Naive thymus-derived CD4-positive, alpha-beta T cell (primary cell): ENCODE measurements at regions of chr1 and their contacts with region 1.

Region 1: GRCh38 chr1:168535536-168535935 is 8.3 kb downstream of the XCL2 start:
- DNase-seq: peak in 7 of 9 donors; percentile 40 to 66 (median 56)
- ATAC-seq: peak; percentile 89
- H3K4me3 ChIP-seq: peak overlapping the region; percentile 5
- H3K4me3 Mint-ChIP-seq: peak overlapping the region; percentile 60 to 86 (median 76)
- H3K27ac ChIP-seq: peak overlapping the region; percentile 43
- H3K27ac Mint-ChIP-seq: peak overlapping the region; percentile 83 to 96 (median 89)
- H3K4me1 ChIP-seq: peaks cover 55 to 59% of the 10 kb centered on the region in 2 donors
- H3K4me1 Mint-ChIP-seq: peaks cover 59 to 93% (median 86%) of the 10 kb centered on the region in 7 donors
- H3K27me3 ChIP-seq: no peaks in the 10 kb centered on the region
- H3K27me3 Mint-ChIP-seq: no peaks in the 10 kb centered on the region

Region 2: DNA sequence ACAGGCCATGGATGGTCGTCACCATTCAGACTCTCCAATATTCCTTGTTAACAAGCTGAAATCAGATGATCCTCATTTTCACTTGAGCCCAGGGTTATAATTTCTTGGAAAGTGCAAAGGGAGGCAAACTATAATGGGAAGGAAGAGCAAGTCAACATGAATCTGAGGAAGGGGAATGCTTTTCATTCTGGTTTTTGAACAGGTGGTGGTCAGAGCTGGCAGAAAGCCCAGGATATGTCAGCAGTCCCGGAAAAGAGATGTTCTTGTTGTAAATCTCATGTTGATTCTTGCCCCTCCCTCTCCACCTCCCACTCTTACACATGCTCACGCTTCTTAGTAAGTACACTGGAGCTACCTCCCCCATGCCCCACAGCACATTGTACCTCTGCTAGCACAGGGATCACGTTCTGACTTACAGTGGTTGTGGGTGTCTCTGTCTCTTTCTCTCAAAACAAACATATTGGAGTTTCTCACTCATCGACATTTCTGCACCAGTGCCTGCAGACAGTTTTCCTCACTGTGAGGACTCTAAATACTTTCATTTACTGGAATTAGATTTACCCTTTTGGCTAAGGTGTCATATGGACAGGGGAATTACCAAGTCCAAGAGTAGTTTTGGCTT is 69.3 kb before region 1 on chr1:
- CTCF ChIA-PET with region 1: no interaction called
- POLR2A ChIA-PET with region 1: interaction called, 6 read pairs
- intact Hi-C with region 1: loop called in 1 of 2 experiments (anchors 5 kb)
- DNase-seq: peak in 4 of 9 donors; percentile 29 to 39 (median 32)
- ATAC-seq: peak; percentile 54
- H3K4me3 ChIP-seq: no peak overlapping the region
- H3K4me3 Mint-ChIP-seq: peak overlapping the region; percentile 44 to 72 (median 56)
- H3K27ac ChIP-seq: no peak overlapping the region
- H3K27ac Mint-ChIP-seq: peak overlapping the region; percentile 66 to 89 (median 80)
- H3K4me1 ChIP-seq: peaks cover 40 to 51% of the 10 kb centered on the region in 2 donors
- H3K4me1 Mint-ChIP-seq: peaks cover 47 to 66% (median 60%) of the 10 kb centered on the region in 7 donors
- H3K27me3 ChIP-seq: no peaks in the 10 kb centered on the region
- H3K27me3 Mint-ChIP-seq: no peaks in the 10 kb centered on the region

Region 3: GRCh38 chr1:168504064-168504837 is 31.3 kb before region 1 on chr1:
- CTCF ChIA-PET with region 1: no interaction called
- POLR2A ChIA-PET with region 1: interaction called, 3 read pairs
- intact Hi-C with region 1: loop called (anchors 5 kb)
- DNase-seq: no peak
- ATAC-seq: peak; percentile 94
- H3K4me3 ChIP-seq: no peak overlapping the region
- H3K4me3 Mint-ChIP-seq: peak overlapping the region in 1 of 10 donors; percentile 33
- H3K27ac ChIP-seq: no peak overlapping the region
- H3K27ac Mint-ChIP-seq: peak overlapping the region in 5 of 9 donors; percentile 0 to 70 (median 5)
- H3K4me1 ChIP-seq: peaks cover 6 to 9% of the 10 kb centered on the region in 2 donors
- H3K4me1 Mint-ChIP-seq: peaks cover 30 to 71% (median 40%) of the 10 kb centered on the region in 7 donors
- H3K27me3 ChIP-seq: no peaks in the 10 kb centered on the region
- H3K27me3 Mint-ChIP-seq: no peaks in the 10 kb centered on the region

Region 4: DNA sequence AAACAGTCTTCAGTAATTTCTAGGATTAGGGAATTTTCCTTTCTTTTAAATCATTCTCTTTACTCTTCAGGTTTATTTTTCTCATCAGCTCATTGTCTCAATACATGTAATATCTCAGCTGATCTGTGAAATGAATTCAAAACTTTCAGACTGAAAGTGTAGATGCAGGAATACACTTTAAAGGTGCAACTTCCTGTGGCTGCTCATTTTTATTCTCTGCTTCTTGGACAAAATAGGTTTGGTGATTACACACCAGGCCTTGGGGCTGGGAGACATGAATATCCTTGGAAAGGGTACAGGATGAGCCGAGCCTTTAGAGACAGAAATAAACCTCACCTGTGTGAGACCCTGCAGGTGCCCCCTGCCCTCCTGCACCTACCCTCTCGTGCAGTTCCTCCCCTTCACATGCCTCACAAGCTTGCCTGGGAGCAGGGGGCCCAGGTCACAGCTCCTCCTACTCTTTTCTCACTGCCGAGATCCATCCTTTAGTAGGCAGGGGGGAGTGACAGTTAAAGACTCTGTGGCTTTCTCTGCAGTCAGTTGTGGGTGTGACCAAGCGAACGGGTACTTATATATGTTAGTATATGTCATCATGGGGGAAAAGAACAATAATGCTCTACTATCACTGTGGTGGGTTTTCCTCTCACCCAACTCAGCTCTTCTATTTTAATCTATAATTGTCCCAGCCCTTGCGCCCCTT is 15.3 kb before region 1 on chr1:
- CTCF ChIA-PET with region 1: no interaction called
- POLR2A ChIA-PET with region 1: interaction called, 11 read pairs
- intact Hi-C with region 1: loop called (anchors 1 kb)
- DNase-seq: peak in 4 of 9 donors; percentile 7 to 17 (median 11)
- ATAC-seq: peak; percentile 87
- H3K4me3 ChIP-seq: peak overlapping the region; percentile 21
- H3K4me3 Mint-ChIP-seq: peak overlapping the region; percentile 54 to 93 (median 68)
- H3K27ac ChIP-seq: peak overlapping the region; percentile 64
- H3K27ac Mint-ChIP-seq: peak overlapping the region; percentile 83 to 94 (median 89)
- H3K4me1 ChIP-seq: peaks cover 42 to 53% of the 10 kb centered on the region in 2 donors
- H3K4me1 Mint-ChIP-seq: peaks cover 45 to 64% (median 57%) of the 10 kb centered on the region in 7 donors
- H3K27me3 ChIP-seq: no peaks in the 10 kb centered on the region
- H3K27me3 Mint-ChIP-seq: peaks cover 0 to 2% (median 0%) of the 10 kb centered on the region in 5 donors

Region 5: GRCh38 chr1:168572633-168573032 is 37.1 kb after region 1 on chr1:
- CTCF ChIA-PET with region 1: no interaction called
- POLR2A ChIA-PET with region 1: no interaction called
- intact Hi-C with region 1: loop called (anchors 5 kb)
- DNase-seq: no peak
- ATAC-seq: no peak
- H3K4me3 ChIP-seq: no peak overlapping the region
- H3K4me3 Mint-ChIP-seq: no peak overlapping the region
- H3K27ac ChIP-seq: no peak overlapping the region
- H3K27ac Mint-ChIP-seq: no peak overlapping the region
- H3K4me1 ChIP-seq: peaks cover 0 to 4% of the 10 kb centered on the region in 2 donors
- H3K4me1 Mint-ChIP-seq: peaks cover 3 to 26% (median 8%) of the 10 kb centered on the region in 7 donors
- H3K27me3 ChIP-seq: no peaks in the 10 kb centered on the region
- H3K27me3 Mint-ChIP-seq: peaks cover 0 to 28% (median 0%) of the 10 kb centered on the region in 5 donors

Region 6: DNA sequence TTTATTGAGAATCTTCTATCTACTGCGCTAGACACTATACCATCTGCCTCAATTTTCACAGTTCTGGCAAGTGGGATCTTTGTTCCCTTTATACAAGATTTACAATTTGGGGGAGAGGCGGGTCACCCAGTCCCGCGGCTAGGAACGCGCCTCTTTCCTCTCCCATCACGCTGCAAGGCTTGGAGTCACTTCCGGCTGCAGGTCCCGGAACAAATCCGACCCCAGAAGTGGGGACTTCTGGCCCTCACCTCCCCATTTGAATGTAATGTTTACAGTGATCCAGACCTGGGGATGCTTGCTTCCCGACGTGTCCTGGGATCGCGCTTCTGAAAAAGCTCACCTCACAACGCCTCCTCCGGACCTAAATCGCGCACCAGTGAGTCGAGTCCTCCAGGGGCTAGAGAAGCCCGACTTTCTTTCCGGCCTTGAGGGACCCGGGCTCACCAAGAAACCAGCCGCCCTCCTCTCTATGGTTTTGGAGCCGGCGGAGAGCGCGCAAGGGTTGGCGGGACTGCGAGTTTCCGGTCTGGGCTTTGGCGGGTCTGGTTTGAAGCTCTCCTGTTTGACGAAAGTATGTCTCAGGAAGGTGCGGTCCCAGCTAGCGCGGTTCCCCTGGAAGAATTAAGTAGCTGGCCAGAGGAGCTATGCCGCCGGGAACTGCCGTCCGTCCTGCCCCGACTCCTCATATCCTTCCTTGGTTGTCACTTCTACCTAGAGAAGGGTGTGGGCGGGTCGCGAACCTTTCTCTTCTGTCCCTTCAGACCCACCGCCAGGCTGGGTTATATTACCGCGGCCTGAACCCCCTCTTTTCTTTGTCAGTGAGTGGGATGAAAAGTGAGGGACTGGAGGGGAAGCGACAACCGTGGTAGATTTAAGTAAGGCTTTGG is 1259.2 kb after region 1 on chr1 and contains the start of gene METTL18:
- CTCF ChIA-PET with region 1: no interaction called
- POLR2A ChIA-PET with region 1: no interaction called
- intact Hi-C with region 1: loop called in 1 of 2 experiments (anchors 10 kb)
- DNase-seq: peak; percentile 72 to 96 (median 92)
- ATAC-seq: peak; percentile 100
- H3K4me3 ChIP-seq: peak within 1 kb of the TSS; percentile 98
- H3K4me3 Mint-ChIP-seq: peak within 1 kb of the TSS; percentile 90 to 100 (median 100)
- H3K27ac ChIP-seq: peak within 1 kb of the TSS; percentile 94
- H3K27ac Mint-ChIP-seq: peak within 1 kb of the TSS; percentile 97 to 100 (median 99)
- H3K4me1 ChIP-seq: peaks cover 10 to 28% of the 10 kb centered on the region in 2 donors
- H3K4me1 Mint-ChIP-seq: peaks cover 26 to 60% (median 56%) of the 10 kb centered on the region in 7 donors
- H3K27me3 ChIP-seq: no peaks in the 10 kb centered on the region
- H3K27me3 Mint-ChIP-seq: no peaks in the 10 kb centered on the region
- total RNA-seq, gene METTL18: 4.9 to 21.1 (median 13.4) TPM